KBM-7 (cell line): ENCODE measurements at regions of chr3 and their contacts with region 1.

Region 1: GRCh38 chr3:32947789-32948238 is 3.6 kb upstream of the CCR4 start:
- DNase-seq: peak; percentile 90

Region 2: DNA sequence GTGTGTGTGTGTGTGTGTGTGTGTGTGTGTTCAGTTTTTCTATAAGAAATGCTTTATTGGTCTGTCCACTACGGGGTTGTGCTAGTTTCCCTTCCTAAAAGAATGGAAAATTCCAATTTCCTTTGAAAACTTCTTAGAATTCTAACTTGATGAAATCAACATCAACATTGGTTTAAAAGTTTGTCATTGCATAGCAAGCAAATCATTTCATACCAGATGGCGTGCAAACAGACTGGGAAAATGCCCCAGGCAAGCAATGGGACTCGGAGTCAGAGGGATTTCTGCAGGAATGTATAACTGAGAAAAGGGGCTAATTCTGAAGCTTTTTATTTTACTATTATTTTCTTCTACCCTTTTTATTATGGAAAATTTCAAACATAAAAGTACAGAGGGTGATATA is 364.1 kb before region 1 on chr3:
- in situ Hi-C with region 1: no loop called
- DNase-seq: no peak

Region 3: GRCh38 chr3:32758375-32758753 is 189.4 kb before region 1 on chr3:
- in situ Hi-C with region 1: loop called (anchors 25 kb)
- DNase-seq: peak; percentile 35